ENCODE measurements at regions of chr16 and their contacts with region 1.

Region 1: GRCh38 chr16:2739625-2740435 is 12.6 kb upstream of the SRRM2 start:
- DNase-seq: peak; percentile 48

Region 2: DNA sequence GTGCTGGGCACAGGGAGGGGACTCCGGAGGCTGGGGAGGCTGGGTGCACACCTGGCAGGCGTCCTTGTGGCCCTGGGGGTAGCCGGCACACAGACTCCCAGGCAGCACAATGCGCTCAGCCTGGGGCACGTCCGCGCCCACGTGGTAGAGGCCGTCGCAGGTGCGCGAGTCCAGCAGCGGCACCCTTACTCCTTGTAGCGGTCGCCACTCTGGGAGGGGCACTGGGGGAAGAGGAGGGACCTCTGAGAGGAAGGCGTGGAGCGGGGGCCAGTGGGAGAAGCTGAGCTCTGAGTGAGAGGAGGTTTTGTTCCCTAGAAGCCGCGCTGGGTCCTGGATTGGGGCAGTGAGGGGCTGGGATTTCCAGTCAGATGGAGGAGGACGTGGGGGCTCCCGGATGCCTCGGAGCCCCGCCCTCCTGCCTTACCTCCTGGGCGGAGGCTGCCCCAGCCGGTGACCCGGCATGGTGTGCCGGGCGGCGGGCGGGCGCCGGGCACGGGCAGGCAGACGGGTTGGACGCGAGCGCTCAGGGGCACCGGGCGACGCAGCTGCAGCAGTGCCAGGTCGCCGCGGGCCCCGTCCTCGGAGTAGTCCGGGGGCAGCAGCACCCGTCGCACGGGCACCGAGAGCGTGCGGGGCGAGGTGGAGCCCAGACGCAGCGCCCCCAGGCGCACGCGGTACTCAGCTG is 45.3 kb after region 1 on chr16:
- intact Hi-C with region 1: no loop called
- DNase-seq: peak; percentile 60

Region 3: DNA sequence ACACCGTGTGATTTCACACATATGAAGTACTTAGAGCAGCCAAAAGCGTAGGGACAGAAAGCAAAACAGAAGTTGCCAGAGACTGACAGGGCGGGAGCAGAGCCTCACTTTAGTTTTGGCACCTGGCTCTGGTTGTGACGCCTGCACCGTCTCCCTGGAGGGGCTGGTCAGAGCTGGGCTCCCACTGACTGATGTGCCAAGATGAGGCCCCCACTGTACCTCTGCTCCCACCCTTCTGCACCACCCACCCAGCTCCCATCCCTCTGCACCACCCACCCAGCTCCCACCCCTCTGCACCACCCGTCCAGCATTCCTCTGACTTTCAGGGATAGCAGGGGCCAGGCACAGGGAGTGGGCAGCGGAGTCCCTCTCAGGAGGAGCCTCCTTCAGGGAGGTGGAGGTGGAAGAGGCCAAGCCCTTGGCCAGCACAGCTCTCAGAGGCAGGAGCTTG is 74.0 kb after region 1 on chr16:
- intact Hi-C with region 1: no loop called
- DNase-seq: peak; percentile 38

Region 4: DNA sequence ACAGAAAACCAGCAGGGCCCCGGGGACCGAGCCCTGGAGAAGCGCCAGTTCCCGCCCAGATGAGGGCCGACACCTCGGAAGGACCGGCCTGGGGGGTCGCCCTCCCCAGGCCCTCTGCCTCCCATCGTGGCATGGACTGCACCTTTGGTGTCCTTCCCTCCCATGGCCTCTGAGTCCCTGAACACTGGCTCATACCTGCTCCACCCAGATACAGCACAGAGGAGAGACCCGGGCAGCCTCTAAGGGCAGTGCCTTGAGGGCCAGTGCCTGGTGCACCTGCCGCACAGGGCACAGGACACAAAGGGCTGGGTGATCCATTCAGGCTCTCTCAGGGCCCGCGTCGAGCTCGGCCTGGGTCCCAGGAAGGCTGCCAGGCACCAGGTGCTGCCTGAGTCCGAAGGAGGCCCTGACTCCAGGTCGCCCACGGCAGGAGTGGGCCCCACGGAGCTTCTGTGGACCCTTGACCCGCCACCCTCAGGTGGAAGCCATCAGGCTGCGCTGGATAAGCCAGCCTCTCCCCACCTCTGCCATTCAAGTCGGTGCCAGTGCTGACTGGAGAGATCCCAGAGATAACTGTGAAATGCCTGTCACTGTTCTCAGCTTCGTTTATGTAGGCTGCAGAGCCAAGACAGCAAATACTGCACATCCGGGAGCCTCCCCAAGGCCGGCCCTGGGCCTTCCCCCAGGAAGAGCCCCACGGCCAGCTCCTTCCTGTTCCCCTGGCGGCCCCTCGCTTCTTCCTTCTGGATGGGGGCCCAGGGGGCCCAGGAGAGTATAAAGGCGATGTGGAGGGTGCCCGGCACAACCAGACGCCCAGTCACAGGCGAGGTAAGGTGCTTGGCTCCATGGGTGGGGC is 89.9 kb after region 1 on chr16 and contains the start of gene ZG16B:
- intact Hi-C with region 1: loop called in 1 of 2 experiments (anchors 10 kb)
- DNase-seq: peak; percentile 65
- total RNA-seq, gene ZG16B: not detected